ENCODE measurements at regions of chr7 and their contacts with region 1.

Region 1: DNA sequence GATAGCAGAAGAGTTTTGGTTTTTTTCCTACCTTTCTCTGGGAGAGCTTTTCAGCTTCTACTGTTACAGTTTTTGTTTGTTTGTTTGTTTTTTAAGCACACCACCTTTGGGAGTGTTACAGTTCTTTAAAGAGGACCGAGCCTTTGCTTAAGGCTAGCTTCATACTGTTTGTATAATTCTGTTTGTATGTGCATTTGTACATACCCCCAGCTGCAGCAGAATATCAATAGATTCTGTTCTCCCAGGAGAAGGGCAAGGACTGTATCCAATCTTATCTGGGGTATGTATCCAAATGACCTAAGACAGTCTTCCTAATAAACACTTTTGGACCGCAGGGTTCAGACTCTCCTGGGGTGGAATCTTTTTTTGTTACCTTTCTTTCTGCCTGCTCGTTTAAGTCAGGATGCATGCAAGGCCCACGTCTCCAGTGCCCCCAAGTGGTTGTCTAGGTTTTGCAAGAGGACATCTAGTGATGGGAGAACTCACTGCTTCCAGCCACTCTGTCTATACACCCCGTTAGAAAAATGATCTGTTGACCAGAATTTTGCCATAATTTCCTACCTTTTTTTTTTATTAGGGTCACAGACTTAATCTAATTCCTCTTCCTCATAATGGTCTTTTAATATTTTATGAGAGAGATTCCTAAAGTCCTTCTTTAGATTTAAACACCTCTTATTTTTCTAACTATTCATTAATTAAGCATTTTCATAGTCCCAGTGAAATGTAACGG is 23.9 kb downstream of the NRF1 start:
- DNase-seq: peak; percentile 40 to 57
- ATAC-seq: peak; percentile 67 to 94 (median 83)
- H3K4me3 ChIP-seq: no peak overlapping the region
- H3K27ac ChIP-seq: no peak overlapping the region
- H3K4me1 ChIP-seq: peaks cover 8% of the 10 kb centered on the region
- H3K27me3 ChIP-seq: no peaks in the 10 kb centered on the region
- CTCF ChIP-seq: peak; percentile 79

Region 2: DNA sequence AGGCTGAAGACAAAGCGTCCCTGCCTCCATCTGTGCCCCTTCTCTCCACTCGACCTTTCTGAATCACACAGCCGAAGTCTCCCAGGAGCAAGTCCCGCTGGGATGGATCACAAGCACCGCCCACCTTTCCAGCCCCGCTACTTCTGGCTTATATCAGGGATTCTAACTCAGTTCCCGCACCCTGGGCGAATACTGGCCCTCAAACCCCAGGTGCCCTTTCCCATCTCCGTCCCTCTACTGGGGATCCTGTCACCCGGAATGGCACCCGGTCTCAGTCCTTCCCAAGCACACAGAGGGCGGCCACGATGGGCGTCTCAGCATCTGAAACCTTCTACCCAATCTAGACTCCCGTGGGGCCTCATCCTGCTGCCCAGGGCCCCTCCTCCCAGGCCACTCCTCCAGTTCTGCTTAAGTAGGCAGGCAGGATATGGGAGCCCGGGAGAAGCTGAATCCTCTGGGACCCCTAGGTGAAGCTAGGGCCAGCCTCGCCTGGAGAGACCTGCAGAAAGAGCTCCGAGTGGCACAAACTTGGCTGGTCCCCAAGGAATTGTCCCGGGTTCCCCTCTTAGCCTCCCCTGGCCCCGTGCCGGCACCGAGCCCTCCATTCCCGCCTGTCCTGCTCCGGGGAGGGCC is 725.7 kb before region 1 on chr7:
- intact Hi-C with region 1: no loop called
- DNase-seq: no peak
- ATAC-seq: no peak
- H3K4me3 ChIP-seq: peak overlapping the region; percentile 32
- H3K27ac ChIP-seq: no peak overlapping the region
- H3K4me1 ChIP-seq: no peaks in the 10 kb centered on the region
- H3K27me3 ChIP-seq: peaks cover 0 to 63% (median 26%) of the 10 kb centered on the region in 3 donors
- CTCF ChIP-seq: no peak

Region 3: DNA sequence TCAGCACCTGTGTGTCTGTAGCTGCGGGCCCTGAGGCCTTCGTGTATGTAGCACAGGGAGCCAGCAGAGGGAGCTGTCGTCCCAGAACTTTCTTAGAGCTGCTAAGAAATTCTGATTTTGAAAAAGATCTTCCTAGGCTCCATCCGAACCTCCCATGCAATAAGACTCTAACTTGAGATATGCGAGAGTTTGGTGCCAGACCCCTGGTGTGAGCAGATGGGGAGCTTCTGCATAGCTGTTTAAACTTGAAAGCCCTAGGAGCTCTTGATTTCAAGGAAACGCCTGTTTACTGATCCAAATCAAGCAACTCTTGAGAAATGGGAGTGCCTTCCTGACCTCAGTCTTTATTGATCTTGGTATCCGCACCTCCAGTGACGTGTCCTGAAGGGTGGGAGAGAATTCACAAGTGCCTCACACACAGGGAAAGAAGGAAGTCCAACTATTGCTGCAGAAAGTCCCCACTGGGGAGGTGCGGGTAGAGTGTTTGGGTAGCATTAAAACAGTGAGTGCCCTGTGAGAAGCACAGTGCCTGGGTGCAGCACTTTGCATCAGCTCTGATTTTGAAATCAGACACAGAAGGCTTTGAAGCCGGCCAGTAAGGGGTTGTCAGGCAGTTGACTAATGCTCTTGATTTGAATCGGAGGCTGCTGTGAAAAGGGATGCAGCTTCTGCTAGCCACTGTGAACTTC is 267.6 kb before region 1 on chr7:
- intact Hi-C with region 1: loop called in 1 of 2 experiments (anchors 5 kb)
- DNase-seq: peak; percentile 62 to 86
- ATAC-seq: peak; percentile 93 to 97 (median 95)
- H3K4me3 ChIP-seq: no peak overlapping the region
- H3K27ac ChIP-seq: peak overlapping the region; percentile 57
- H3K4me1 ChIP-seq: peaks cover 12% of the 10 kb centered on the region
- H3K27me3 ChIP-seq: no peaks in the 10 kb centered on the region
- CTCF ChIP-seq: peak; percentile 89

Region 4: DNA sequence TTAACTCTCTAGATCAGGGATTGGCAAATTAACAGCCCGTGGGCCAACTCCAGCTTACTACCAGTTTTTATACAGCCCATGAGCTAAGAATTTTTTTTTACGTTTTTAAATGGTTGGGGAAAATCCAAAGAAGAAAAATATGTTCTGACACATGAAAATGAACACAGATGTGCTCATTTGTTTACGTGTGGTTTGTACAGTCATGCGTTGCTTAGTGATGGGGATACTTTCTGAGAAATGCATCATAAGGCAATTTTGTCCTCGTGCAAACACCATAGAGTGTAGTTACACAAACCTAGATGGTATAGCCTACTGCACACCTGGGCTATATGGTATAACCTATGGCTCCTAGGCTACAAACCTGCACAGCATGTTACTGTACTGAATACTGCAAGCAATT is 141.4 kb before region 1 on chr7:
- intact Hi-C with region 1: loop called in 1 of 2 experiments (anchors 10 kb)
- DNase-seq: no peak
- ATAC-seq: no peak
- H3K4me3 ChIP-seq: no peak overlapping the region
- H3K27ac ChIP-seq: no peak overlapping the region
- H3K4me1 ChIP-seq: no peaks in the 10 kb centered on the region
- H3K27me3 ChIP-seq: no peaks in the 10 kb centered on the region
- CTCF ChIP-seq: no peak

Region 5: DNA sequence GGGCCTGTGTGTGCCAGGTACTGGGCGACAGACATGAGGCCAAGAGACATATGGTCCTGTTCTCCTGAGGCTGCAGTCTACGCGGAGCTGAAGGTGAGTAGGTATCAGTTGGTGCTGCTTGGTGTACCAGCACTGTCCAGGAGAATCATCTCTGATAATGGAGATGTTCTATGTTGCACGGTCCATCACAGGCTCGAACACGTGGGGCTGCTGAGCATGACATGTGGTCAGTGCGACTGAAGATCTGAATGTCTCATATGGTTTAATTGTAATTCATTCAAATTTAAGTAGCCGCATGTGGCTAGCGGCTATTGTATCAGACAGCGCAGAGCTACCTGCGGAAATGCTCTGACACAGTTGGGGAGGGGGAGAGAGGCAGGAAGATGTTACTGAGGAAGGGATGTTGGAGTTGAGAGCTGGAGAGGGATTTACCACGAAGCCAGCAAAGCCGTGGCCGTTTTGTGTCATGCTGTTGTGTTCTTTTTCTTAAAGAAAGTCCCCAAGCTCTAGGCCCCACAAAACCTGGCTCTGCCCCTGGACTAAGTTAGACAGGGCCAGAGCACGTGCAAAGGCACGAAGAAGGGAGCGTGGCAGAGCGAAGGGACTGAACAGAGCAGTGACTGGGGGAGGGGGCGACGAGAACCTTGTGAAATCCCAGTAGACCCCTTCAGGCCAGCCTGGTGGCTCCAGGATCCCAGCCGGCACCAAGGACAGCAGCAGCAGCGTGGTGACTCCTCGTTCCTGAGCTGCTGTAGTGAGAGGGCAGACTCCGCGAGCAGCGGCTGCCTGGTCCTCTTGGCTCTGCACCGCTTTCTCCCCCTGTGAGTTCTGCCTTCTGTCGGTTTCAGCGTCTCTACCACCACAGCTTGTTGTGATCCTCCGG is 113.1 kb before region 1 on chr7:
- intact Hi-C with region 1: no loop called
- DNase-seq: no peak
- ATAC-seq: no peak
- H3K4me3 ChIP-seq: no peak overlapping the region
- H3K27ac ChIP-seq: no peak overlapping the region
- H3K4me1 ChIP-seq: no peaks in the 10 kb centered on the region
- H3K27me3 ChIP-seq: peaks cover 0 to 5% (median 2%) of the 10 kb centered on the region in 3 donors
- CTCF ChIP-seq: no peak

Region 6: DNA sequence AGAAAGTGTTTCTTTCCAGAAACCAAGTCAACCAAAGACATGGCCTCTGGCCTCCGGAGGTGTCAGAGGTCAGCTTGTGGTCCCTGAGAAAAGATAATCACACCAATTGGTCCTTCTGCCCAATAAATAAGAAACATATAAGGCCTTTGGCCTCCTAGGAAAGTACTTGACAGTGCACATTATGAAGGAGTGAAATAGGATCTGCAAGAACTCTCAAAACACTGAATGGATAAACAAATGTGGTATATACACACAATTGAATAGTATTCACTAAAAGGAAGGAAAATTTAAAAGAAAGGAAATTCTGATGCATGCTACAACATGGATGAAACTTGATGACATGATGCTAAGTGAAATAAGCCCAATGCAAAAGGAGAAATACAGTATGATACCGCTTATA is 59.3 kb before region 1 on chr7:
- intact Hi-C with region 1: loop called in 1 of 2 experiments (anchors 5 kb)
- DNase-seq: no peak
- ATAC-seq: no peak
- H3K4me3 ChIP-seq: no peak overlapping the region
- H3K27ac ChIP-seq: no peak overlapping the region
- H3K4me1 ChIP-seq: no peaks in the 10 kb centered on the region
- H3K27me3 ChIP-seq: no peaks in the 10 kb centered on the region
- CTCF ChIP-seq: no peak

Region 7: DNA sequence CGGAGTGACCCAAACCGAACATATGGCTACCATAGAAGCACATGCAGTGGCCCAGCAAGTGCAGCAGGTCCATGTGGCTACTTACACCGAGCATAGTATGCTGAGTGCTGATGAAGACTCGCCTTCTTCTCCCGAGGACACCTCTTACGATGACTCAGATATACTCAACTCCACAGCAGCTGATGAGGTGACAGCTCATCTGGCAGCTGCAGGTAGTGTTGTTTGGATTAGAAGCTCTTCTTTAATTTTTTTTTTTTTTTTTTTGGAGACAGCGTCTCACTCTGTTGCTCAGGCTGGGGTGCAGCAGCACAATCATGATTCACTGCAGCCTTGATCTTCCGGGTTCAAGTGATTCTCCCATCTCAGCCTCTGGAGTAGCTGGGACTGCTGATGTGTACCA is 21.9 kb after region 1 on chr7:
- intact Hi-C with region 1: no loop called
- DNase-seq: no peak
- ATAC-seq: peak in 1 of 4 donors; percentile 36
- H3K4me3 ChIP-seq: no peak overlapping the region
- H3K27ac ChIP-seq: no peak overlapping the region
- H3K4me1 ChIP-seq: no peaks in the 10 kb centered on the region
- H3K27me3 ChIP-seq: no peaks in the 10 kb centered on the region
- CTCF ChIP-seq: no peak

Region 8: DNA sequence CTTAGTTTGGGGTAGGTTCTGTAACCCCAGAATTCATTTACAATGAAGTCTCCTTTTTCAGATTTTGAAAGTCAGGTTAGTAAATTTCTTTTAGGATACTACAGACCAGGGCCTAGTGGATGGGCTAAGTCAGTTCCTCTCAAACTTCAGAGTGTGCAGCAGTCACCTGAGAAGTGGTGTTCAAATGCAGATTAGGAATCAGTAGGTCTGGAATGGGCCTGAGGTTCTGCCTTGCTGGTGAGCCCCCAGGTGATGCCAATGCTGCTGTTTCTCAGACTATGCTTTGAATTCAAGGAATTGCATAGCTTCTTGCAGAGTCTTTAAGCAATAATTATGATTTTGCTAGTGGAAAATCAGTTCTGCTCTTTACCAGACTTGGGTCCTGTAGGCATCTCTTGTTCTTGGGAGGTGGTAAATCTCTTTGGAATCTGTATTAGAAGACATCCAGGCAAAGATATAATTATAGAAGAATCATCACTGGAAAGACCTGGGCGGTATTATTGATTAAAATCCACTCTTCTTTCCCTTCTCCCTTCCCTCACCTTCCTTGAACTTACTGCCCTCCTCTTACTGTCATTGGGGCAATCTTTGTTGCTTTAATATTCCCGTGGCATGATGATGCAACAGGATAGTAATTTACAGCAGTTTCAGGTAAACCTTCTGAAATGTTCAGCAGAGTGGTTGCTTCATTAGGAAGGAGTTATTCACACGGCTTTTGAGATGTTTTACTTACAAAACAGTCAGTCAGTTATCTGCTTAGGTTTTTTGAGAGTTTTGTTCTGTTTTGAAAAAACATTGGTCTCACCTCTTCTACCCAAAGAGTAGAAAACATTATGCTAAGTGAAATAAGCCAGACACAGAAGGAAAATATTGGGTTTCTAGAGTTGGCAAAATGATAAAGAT is 63.3 kb after region 1 on chr7:
- intact Hi-C with region 1: no loop called
- DNase-seq: no peak
- ATAC-seq: no peak
- H3K4me3 ChIP-seq: no peak overlapping the region
- H3K27ac ChIP-seq: no peak overlapping the region
- H3K4me1 ChIP-seq: no peaks in the 10 kb centered on the region
- H3K27me3 ChIP-seq: no peaks in the 10 kb centered on the region
- CTCF ChIP-seq: no peak